Activated T-helper 1 cell treated with anti-CD3 and anti-CD28 coated beads, Interleukin-12 subunit alpha, Interleukin-12 subunit beta, Interleukin-2, Interleukin-4 antibody, amounts not matched to agents 30 ng/mL and 10 ng/mL and 1 ng/mL, durations not matched to agents 14 hours and 24 hours and 36 hours (primary cell): ENCODE measurements at regions of chr19 and their contacts with region 1.

Region 1: GRCh38 chr19:5904352-5905113 is at the start of gene VMAC:
- DNase-seq: peak; percentile 100
- H3K4me3 Mint-ChIP-seq: peak within 1 kb of the TSS; percentile 99
- H3K27ac Mint-ChIP-seq: peak within 1 kb of the TSS; percentile 97
- H3K4me1 Mint-ChIP-seq: peaks cover 30% of the 10 kb centered on the region
- H3K27me3 Mint-ChIP-seq: no peaks in the 10 kb centered on the region
- total RNA-seq, gene VMAC: 3.5 and 4.2 TPM in 2 replicates

Region 2: GRCh38 chr19:5690125-5690954 is 214.2 kb before region 1 on chr19 and contains the start of gene RPL36:
- intact Hi-C with region 1: loop called (anchors 1 kb)
- DNase-seq: peak; percentile 98
- H3K4me3 Mint-ChIP-seq: peak within 1 kb of the TSS; percentile 99
- H3K27ac Mint-ChIP-seq: peak within 1 kb of the TSS; percentile 95
- H3K4me1 Mint-ChIP-seq: peaks cover 9% of the 10 kb centered on the region
- H3K27me3 Mint-ChIP-seq: no peaks in the 10 kb centered on the region
- total RNA-seq, gene RPL36: 1,000 and 1,001 TPM in 2 replicates

Region 3: DNA sequence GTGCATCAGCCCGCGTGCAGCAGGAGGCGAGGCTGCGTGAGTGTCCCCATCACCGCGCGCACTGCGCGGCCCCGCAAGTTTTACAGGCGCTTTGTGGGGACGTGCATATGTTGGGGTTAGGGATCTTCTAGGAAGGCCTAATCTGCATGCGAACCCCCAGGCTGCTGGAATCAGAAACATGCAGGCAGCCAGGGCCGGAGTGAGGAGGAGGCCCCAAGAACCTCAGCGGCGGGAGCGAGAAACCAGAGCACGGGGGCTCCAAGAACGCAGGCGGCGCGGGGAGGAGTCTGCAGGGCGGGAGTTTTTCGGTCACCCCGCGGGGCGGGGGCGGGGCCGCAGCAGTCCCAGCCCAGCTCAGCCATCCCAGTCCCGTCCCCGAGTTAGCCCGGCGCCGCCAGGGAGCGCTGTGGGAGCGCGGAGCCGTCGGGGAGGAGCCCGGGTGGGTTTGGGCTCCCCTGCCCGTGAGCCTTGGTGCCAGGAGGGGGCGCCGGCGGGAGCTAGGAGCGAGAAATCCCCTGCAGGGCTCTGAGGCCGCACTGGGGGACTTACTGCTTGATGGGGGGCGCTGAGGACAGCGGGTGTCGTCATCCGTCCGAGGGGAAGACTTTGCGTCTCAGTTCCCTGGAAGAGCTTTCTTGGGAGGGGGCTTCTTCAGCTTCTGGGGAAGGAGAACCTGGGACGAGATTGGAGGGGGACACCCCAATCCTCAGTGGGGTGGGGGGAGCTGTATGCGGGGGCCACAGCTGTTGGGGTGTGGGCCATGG is 100.6 kb before region 1 on chr19:
- intact Hi-C with region 1: loop called (anchors 1 kb)
- DNase-seq: peak; percentile 92
- H3K4me3 Mint-ChIP-seq: peak overlapping the region; percentile 80
- H3K27ac Mint-ChIP-seq: peak overlapping the region; percentile 63
- H3K4me1 Mint-ChIP-seq: peaks cover 13% of the 10 kb centered on the region
- H3K27me3 Mint-ChIP-seq: peaks cover 35% of the 10 kb centered on the region

Region 4: DNA sequence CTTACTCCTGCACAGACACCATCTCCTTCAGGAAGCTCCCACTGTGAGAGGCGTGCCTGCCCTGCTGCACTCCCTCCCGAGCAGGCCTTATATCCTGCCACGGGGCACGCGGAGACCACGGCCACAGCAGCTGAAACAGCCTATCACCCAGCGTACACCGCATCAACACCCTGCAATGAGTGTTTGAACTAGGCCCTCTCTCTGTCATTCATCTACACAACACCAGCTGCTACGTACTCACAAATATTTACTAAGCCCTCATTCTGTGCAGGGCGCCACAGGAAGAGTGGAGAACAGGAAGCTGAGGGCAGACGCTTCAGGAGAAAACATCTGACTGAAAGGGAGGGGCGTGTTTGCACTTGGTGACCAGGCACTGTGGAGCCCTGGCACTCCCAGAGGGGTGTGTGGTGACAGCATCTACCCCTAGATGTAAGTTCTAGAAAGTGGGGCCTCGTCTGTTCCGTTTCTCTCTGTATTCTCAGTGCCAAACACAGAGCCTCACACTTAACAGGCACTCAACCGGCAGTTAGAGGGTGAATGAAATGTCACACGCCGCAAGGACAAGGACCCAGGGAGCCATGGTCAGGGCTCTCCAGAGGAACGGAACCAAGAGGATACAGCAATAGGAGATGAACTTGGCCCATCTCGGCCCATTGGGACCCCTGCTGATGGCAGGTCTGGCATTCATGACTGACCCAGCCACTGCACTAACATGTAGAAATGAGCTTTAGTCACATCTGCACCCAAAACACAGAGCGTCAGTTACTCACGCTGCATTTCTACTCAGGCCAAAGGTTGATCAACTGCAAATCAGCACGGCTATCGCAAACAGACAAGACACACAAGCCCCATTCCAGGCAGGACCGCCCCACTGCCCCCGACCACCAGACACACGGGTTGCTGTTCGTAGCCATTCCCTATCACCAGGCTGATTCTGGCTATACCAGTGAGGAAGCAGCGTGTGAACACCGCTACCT is 57.7 kb after region 1 on chr19:
- intact Hi-C with region 1: loop called (anchors 1 kb)
- DNase-seq: peak; percentile 74
- H3K4me3 Mint-ChIP-seq: peak overlapping the region; percentile 58
- H3K27ac Mint-ChIP-seq: peak overlapping the region; percentile 88
- H3K4me1 Mint-ChIP-seq: peaks cover 71% of the 10 kb centered on the region
- H3K27me3 Mint-ChIP-seq: no peaks in the 10 kb centered on the region

Region 5: GRCh38 chr19:6372594-6373095 is 468.1 kb after region 1 on chr19 and contains the start of gene ALKBH7:
- intact Hi-C with region 1: loop called (anchors 1 kb)
- DNase-seq: peak; percentile 95
- H3K4me3 Mint-ChIP-seq: peak within 1 kb of the TSS; percentile 81
- H3K27ac Mint-ChIP-seq: peak within 1 kb of the TSS; percentile 81
- H3K4me1 Mint-ChIP-seq: peaks cover 11% of the 10 kb centered on the region
- H3K27me3 Mint-ChIP-seq: no peaks in the 10 kb centered on the region
- total RNA-seq, gene ALKBH7: 24.8 and 27.1 TPM in 2 replicates